Heart right ventricle (tissue), 16 donors: ENCODE measurements at regions of chr19 and their contacts with region 1.

Region 1: GRCh38 chr19:2274931-2275535 is 6.9 kb downstream of the PEAK3 start:
- DNase-seq: peak; percentile 60 to 68
- ATAC-seq: peak in 7 of 8 donors; percentile 10 to 49 (median 31)
- H3K4me3 ChIP-seq: no peak overlapping the region
- H3K27ac ChIP-seq: peak overlapping the region in 7 of 10 donors; percentile 11 to 56 (median 44)
- H3K4me1 ChIP-seq: peaks cover 19 to 55% (median 49%) of the 10 kb centered on the region in 9 donors
- H3K27me3 ChIP-seq: no peaks in the 10 kb centered on the region
- CTCF ChIP-seq: peak; percentile 9 to 67 (median 64)

Region 2: GRCh38 chr19:2168619-2169424 is 106.2 kb before region 1 on chr19:
- intact Hi-C with region 1: loop called in 2 of 10 experiments (anchors 2 to 5 kb)
- DNase-seq: peak; percentile 94 to 96
- ATAC-seq: peak; percentile 83 to 95 (median 92)
- H3K4me3 ChIP-seq: peak overlapping the region in 6 of 10 donors; percentile 22 to 35 (median 26)
- H3K27ac ChIP-seq: peak overlapping the region; percentile 80 to 95 (median 92)
- H3K4me1 ChIP-seq: peaks cover 59 to 93% (median 86%) of the 10 kb centered on the region in 9 donors
- H3K27me3 ChIP-seq: no peaks in the 10 kb centered on the region
- CTCF ChIP-seq: peak in 1 of 9 donors; percentile 39

Region 3: GRCh38 chr19:2199215-2199614 is 75.8 kb before region 1 on chr19:
- intact Hi-C with region 1: no loop called
- DNase-seq: no peak
- ATAC-seq: peak; percentile 34 to 63 (median 49)
- H3K4me3 ChIP-seq: no peak overlapping the region
- H3K27ac ChIP-seq: no peak overlapping the region
- H3K4me1 ChIP-seq: peaks cover 0 to 9% (median 0%) of the 10 kb centered on the region in 9 donors
- H3K27me3 ChIP-seq: no peaks in the 10 kb centered on the region
- CTCF ChIP-seq: peak in 8 of 9 donors; percentile 14 to 46 (median 36)

Region 4: GRCh38 chr19:2315818-2316353 is 40.9 kb after region 1 on chr19:
- intact Hi-C with region 1: loop called in 7 of 10 experiments (anchors 2 to 5 kb)
- DNase-seq: peak; percentile 71 to 72
- ATAC-seq: peak; percentile 89 to 94 (median 93)
- H3K4me3 ChIP-seq: no peak overlapping the region
- H3K27ac ChIP-seq: peak overlapping the region in 1 of 10 donors; percentile 70
- H3K4me1 ChIP-seq: peaks cover 0 to 22% (median 6%) of the 10 kb centered on the region in 9 donors
- H3K27me3 ChIP-seq: peaks cover 0 to 27% (median 26%) of the 10 kb centered on the region in 7 donors
- CTCF ChIP-seq: peak; percentile 31 to 76 (median 69)

Region 5: GRCh38 chr19:2391118-2391725 is 116.2 kb after region 1 on chr19:
- intact Hi-C with region 1: loop called in 5 of 10 experiments (anchors 5 to 10 kb)
- DNase-seq: peak in 1 of 2 donors; percentile 35
- ATAC-seq: peak in 5 of 8 donors; percentile 33 to 71 (median 43)
- H3K4me3 ChIP-seq: no peak overlapping the region
- H3K27ac ChIP-seq: no peak overlapping the region
- H3K4me1 ChIP-seq: peaks cover 0 to 5% (median 0%) of the 10 kb centered on the region in 9 donors
- H3K27me3 ChIP-seq: peaks cover 0 to 31% (median 6%) of the 10 kb centered on the region in 7 donors
- CTCF ChIP-seq: peak; percentile 62 to 82 (median 74)